ENCODE measurements at regions of chr4 and their contacts with region 1.

Region 1: GRCh38 chr4:173370477-173371291 is at the start of gene SAP30:
- H3K4me3 Mint-ChIP-seq: peak within 1 kb of the TSS; percentile 100
- H3K27ac Mint-ChIP-seq: peak within 1 kb of the TSS; percentile 96
- H3K4me1 Mint-ChIP-seq: peaks cover 16% of the 10 kb centered on the region
- H3K27me3 Mint-ChIP-seq: no peaks in the 10 kb centered on the region

Region 2: GRCh38 chr4:173168396-173169177 is 202.1 kb before region 1 on chr4 and contains the start of gene GALNT7:
- intact Hi-C with region 1: loop called (anchors 2 kb)
- H3K4me3 Mint-ChIP-seq: peak within 1 kb of the TSS; percentile 90
- H3K27ac Mint-ChIP-seq: peak within 1 kb of the TSS; percentile 87
- H3K4me1 Mint-ChIP-seq: peaks cover 46% of the 10 kb centered on the region
- H3K27me3 Mint-ChIP-seq: no peaks in the 10 kb centered on the region

Region 3: GRCh38 chr4:173334085-173334772 is 36.5 kb before region 1 on chr4 and contains the start of gene HMGB2:
- intact Hi-C with region 1: loop called (anchors 1 kb)
- H3K4me3 Mint-ChIP-seq: peak within 1 kb of the TSS; percentile 99
- H3K27ac Mint-ChIP-seq: peak within 1 kb of the TSS; percentile 100
- H3K4me1 Mint-ChIP-seq: peaks cover 26% of the 10 kb centered on the region
- H3K27me3 Mint-ChIP-seq: no peaks in the 10 kb centered on the region

Region 4: GRCh38 chr4:174282836-174283506 is 912.3 kb after region 1 on chr4:
- intact Hi-C with region 1: loop called (anchors 2 kb)
- H3K4me3 Mint-ChIP-seq: peak overlapping the region; percentile 93
- H3K27ac Mint-ChIP-seq: peak overlapping the region; percentile 100
- H3K4me1 Mint-ChIP-seq: peaks cover 47% of the 10 kb centered on the region
- H3K27me3 Mint-ChIP-seq: no peaks in the 10 kb centered on the region

Measured in dendritic cell treated with granulocyte-macrophage colony-stimulating factor and Interleukin-4, amounts not matched to agents 40 ng/mL and 50 ng/mL, for 4 days (primary cell).